ENCODE measurements at regions of chr1 and their contacts with region 1.

Region 1: DNA sequence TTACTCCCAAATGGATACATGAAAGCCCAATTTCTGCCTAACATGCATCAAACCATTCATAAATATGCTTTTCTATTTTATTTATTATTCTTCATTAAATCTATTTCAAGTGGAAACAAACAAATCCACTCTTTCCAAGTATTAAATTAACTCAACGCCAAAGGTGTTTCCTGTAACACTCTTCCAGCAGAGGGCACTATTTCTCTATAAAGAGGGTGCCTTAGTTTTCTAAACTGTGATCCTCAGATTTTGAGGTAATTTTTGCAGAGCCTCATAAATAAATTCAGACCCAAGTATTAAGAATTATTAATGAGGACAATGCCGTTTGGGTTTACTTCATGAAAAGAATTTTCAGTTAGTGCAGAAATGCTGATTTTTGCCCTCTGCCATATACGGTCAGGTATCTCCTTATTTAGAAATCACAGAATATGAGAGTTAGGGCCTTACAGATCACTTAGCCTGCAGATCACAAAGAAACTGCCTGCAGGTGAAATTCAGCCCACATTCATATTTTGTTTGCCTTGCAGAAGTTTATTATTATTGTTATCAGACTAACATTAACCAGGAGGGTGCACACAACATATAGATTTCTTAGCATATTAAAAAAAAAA is 40.1 kb upstream of the MYSM1 start:
- DNase-seq: no peak
- H3K4me3 ChIP-seq: no peak overlapping the region
- H3K27ac ChIP-seq: no peak overlapping the region
- H3K4me1 ChIP-seq: no peaks in the 10 kb centered on the region
- H3K27me3 ChIP-seq: no peaks in the 10 kb centered on the region
- CTCF ChIP-seq: peak; percentile 56 to 88 (median 78)
- POLR2A ChIP-seq: no peak

Region 2: DNA sequence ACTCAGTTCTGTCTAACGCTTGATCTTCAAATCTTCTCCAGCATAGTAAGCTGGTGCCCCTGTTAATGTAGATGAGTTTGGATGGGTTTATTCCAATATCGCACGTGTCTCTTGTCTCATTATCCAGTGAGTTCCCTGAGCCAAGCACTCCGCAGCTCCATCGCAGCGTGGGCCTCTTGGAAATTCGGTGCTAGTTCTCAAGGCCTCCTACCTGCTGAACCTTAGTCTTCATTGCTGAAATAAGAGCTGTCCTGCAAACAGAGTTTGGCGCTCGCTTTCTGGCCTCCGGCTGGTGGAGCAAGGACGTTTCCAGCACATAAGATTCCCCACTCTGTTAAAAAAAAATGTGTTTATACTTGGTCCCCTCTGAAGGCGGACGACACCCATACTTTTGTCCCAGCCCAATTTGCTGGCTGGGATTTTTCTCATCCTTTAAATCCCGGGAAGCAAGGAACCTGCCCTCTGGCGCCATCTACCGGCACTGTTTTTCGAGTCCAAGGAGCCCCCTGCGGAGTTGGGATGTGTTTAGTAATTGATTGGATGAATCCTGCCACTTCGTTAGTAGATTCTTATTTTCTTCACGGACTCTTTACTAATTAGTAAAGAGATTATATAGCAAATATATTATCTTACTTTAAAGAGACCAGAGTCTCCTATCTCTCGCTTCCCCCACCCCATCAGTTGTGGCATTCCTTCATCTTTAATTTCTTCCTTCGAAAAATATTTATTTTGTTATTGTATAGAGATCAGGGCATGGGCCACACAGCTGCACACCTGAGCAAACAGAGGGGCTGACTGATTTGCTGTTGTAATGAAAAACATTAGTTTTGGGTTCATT is 29.2 kb after region 1 on chr1:
- intact Hi-C with region 1: loop called (anchors 2 kb)
- DNase-seq: peak; percentile 79 to 86
- H3K4me3 ChIP-seq: no peak overlapping the region
- H3K27ac ChIP-seq: no peak overlapping the region
- H3K4me1 ChIP-seq: peaks cover 4 to 25% of the 10 kb centered on the region in 2 donors
- H3K27me3 ChIP-seq: no peaks in the 10 kb centered on the region
- CTCF ChIP-seq: peak; percentile 63 to 88 (median 72)
- POLR2A ChIP-seq: no peak

Region 3: DNA sequence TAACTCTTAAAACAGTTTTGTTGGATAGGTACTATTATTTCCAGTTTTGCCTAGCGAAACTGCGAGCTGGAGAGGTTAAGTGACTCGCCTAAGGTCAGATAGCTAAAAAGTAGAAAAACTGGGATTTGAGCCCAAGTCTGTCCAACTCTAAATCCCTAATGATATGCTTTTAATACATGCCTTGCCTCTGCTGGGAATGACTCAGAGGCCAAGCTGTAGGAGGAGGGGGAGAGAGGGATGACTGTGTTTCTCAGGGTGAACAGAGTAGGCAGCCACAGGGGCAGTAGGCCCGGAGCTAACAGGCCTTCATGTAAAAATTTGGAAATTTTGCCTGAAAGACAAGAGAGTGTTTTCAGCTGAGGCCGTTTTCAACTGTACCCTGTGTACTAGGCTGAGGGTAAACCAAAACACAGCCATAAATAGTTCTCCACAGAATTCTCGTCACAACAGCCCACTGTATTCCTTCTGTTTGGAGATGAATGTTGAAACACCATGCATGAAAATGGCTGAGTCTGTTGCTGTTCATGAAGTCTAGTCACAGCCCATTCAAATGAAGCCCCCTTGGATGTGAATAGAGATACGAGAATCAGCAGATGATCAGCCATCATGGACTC is 967.3 kb after region 1 on chr1:
- intact Hi-C with region 1: loop called (anchors 10 kb)
- DNase-seq: no peak
- H3K4me3 ChIP-seq: no peak overlapping the region
- H3K27ac ChIP-seq: peak overlapping the region in 1 of 3 donors; percentile 6
- H3K4me1 ChIP-seq: peaks cover 4 to 33% of the 10 kb centered on the region in 2 donors
- H3K27me3 ChIP-seq: no peaks in the 10 kb centered on the region
- CTCF ChIP-seq: no peak
- POLR2A ChIP-seq: no peak

Region 4: GRCh38 chr1:59759156-59759925 is 1019.4 kb after region 1 on chr1:
- intact Hi-C with region 1: loop called (anchors 5 kb)
- DNase-seq: peak; percentile 74 to 81
- H3K4me3 ChIP-seq: no peak overlapping the region
- H3K27ac ChIP-seq: peak overlapping the region in 1 of 3 donors; percentile 34
- H3K4me1 ChIP-seq: peaks cover 4 to 5% of the 10 kb centered on the region in 2 donors
- H3K27me3 ChIP-seq: no peaks in the 10 kb centered on the region
- CTCF ChIP-seq: peak; percentile 78 to 97 (median 94)
- POLR2A ChIP-seq: no peak

Measured in thyroid gland (tissue), 4 donors.